Naive thymus-derived CD8-positive, alpha-beta T cell (primary cell): ENCODE measurements at regions of chr14 and their contacts with region 1.

Region 1: GRCh38 chr14:91060351-91061055 is at the start of gene RPS6KA5:
- DNase-seq: peak; percentile 95 to 100 (median 100)
- ATAC-seq: peak; percentile 80 to 82
- H3K4me3 Mint-ChIP-seq: peak within 1 kb of the TSS in 9 of 10 donors; percentile 76 to 91 (median 86)
- H3K27ac Mint-ChIP-seq: peak within 1 kb of the TSS in 9 of 10 donors; percentile 27 to 91 (median 83)
- H3K4me1 Mint-ChIP-seq: peaks cover 31 to 65% (median 61%) of the 10 kb centered on the region in 4 donors
- H3K27me3 Mint-ChIP-seq: no peaks in the 10 kb centered on the region
- polyA plus RNA-seq, gene RPS6KA5: 12.3 to 14.5 (median 14.3) TPM

Region 2: DNA sequence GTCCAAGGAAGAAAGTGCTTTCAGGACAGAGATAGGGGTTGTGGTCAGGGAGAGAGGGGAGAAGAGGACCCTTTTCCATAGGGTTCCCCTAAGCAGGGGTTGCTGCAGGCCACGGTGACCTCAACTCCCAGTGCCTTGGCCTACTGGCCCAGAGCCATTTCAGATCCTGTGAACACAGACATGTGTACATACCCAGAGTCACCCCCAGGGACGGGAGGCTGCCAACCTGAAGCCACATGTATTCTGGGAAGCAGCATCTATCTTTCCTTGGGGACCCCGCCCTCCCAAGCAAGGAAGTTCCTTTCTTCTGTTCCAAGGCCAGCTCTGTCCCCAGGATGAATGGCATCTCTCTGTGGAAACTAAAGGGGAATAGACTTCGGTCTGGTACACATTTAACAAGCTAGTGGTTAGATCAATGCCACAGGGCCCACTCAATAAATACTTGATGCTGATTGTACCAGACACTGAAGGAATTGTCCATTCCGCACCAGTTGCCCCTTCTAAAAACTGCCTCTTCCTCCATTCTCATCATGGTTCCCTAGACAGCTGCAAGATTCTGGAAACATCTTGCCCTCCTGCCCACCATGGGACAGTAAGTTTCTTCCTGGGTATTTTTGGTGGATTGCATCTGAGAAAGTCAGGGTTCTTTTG is 28.2 kb after region 1 on chr14:
- POLR2A ChIA-PET with region 1: interaction called, 14 read pairs
- DNase-seq: no peak
- ATAC-seq: no peak
- H3K4me3 Mint-ChIP-seq: no peak overlapping the region
- H3K27ac Mint-ChIP-seq: no peak overlapping the region
- H3K4me1 Mint-ChIP-seq: peaks cover 10 to 17% (median 13%) of the 10 kb centered on the region in 4 donors
- H3K27me3 Mint-ChIP-seq: peaks cover 0 to 7% (median 0%) of the 10 kb centered on the region in 5 donors

Region 3: DNA sequence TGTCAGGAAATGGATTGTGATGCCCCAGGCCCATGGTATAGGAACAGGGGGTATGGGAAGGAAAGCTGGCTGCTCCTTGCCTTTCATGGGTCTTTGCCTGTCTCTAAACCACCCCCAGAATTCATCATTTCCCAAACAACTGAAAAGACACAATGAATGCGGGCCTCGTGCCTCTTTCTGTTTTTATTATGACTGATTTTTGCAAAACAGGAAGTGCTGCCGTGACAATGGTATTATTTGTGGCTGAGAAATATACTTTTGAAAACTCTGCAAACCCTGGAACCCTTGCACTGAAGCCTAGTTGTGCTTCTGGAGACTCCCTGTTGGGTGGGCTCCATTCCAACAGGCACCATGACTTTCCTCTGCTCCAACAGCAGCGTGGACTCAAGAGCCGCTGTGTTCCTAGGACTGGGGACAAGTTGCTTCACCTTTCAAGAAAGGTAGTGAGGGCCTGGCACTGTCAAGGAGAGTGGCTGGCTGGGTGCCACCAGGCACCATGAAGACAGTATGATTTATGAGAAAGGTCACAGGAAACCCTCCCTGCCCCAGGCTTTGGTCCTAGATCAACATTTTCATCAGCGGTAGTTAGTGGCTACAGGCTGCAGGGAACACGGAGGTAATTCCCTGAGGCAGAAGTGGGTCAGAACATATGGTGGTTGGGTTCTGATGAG is 48.6 kb after region 1 on chr14:
- POLR2A ChIA-PET with region 1: no interaction called
- DNase-seq: peak in 5 of 10 donors; percentile 21 to 63 (median 26)
- ATAC-seq: peak; percentile 21 to 34
- H3K4me3 Mint-ChIP-seq: peak overlapping the region in 9 of 10 donors; percentile 40 to 77 (median 61)
- H3K27ac Mint-ChIP-seq: peak overlapping the region; percentile 78 to 96 (median 90)
- H3K4me1 Mint-ChIP-seq: peaks cover 29 to 55% (median 50%) of the 10 kb centered on the region in 4 donors
- H3K27me3 Mint-ChIP-seq: no peaks in the 10 kb centered on the region